Motor neuron (in vitro differentiated cells): ENCODE measurements at regions of chr3 and their contacts with region 1.

Region 1: GRCh38 chr3:196684548-196685407 is 27.3 kb downstream of the CEP19 start:
- ATAC-seq: peak; percentile 57 to 89 (median 65)
- H3K4me3 ChIP-seq: no peak overlapping the region
- H3K27ac ChIP-seq: no peak overlapping the region
- H3K4me1 ChIP-seq: peaks cover 0 to 4% of the 10 kb centered on the region in 2 donors

Region 2: DNA sequence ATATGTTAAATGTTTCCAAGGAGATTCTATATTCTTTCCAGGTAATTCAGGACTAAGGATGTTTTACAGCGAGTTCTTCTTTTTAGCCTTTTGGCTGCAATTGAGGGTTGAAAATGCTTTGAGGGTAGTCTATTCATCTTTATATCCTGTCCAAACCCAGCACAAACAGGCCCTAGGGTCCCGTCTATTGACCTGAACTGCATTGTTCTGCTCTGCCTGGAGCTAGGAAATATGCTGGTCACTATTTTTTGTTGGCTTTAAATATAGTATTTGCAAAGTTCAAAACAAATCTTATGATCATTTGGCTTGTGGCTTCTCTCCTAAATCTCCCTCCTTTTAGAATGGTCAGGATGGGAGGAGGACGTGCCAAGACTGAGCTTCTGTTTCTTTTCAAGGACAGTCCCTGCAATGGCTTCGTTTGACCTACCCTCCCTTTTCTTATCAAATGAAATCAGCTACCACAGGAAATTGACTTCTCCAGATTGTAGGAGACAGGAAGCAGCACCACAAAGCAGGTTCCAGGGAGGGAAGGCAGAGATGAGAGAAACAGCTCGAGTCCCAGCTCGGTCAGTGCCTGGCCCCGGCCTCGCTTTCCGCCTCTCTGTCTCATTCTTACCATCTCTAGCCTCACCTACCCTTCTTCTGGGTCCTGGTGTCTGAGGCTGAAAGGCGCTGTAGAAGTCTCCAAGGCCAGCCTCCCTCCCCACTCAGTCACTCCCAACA is 72.9 kb before region 1 on chr3:
- in situ Hi-C with region 1: loop called in 2 of 9 experiments (anchors 10 kb)
- ATAC-seq: no peak
- H3K4me3 ChIP-seq: no peak overlapping the region
- H3K27ac ChIP-seq: no peak overlapping the region
- H3K4me1 ChIP-seq: peaks cover 0 to 4% of the 10 kb centered on the region in 2 donors

Region 3: GRCh38 chr3:197023241-197023997 is 338.6 kb after region 1 on chr3:
- in situ Hi-C with region 1: no loop called
- ATAC-seq: peak in 5 of 8 experiments; percentile 12 to 62 (median 33)
- H3K4me3 ChIP-seq: no peak overlapping the region
- H3K27ac ChIP-seq: no peak overlapping the region
- H3K4me1 ChIP-seq: peaks cover 36 to 45% of the 10 kb centered on the region in 2 donors

Region 4: GRCh38 chr3:197203714-197204146 is 519.0 kb after region 1 on chr3:
- in situ Hi-C with region 1: no loop called
- ATAC-seq: no peak
- H3K4me3 ChIP-seq: no peak overlapping the region
- H3K27ac ChIP-seq: no peak overlapping the region
- H3K4me1 ChIP-seq: peaks cover 8 to 10% of the 10 kb centered on the region in 2 donors